Caco-2 (cell line): ENCODE measurements at regions of chr1 and their contacts with region 1.

Region 1: GRCh38 chr1:145740266-145740665 is 21.0 kb downstream of the CD160 start:
- DNase-seq: peak; percentile 52 to 56
- H3K4me3 ChIP-seq: no peak overlapping the region
- H3K4me3 Mint-ChIP-seq: no peak overlapping the region
- H3K27ac Mint-ChIP-seq: peak overlapping the region; percentile 17
- H3K4me1 ChIP-seq: peaks cover 20% of the 10 kb centered on the region
- H3K4me1 Mint-ChIP-seq: peaks cover 19% of the 10 kb centered on the region
- H3K27me3 ChIP-seq: no peaks in the 10 kb centered on the region
- H3K27me3 Mint-ChIP-seq: peaks cover 2% of the 10 kb centered on the region
- CTCF ChIP-seq: no peak

Region 2: GRCh38 chr1:145711213-145711651 is 29.0 kb before region 1 on chr1:
- CTCF ChIA-PET with region 1: no interaction called
- POLR2A ChIA-PET with region 1: no interaction called
- intact Hi-C with region 1: loop called (anchors 1 kb)
- DNase-seq: peak; percentile 89 to 93
- H3K4me3 ChIP-seq: no peak overlapping the region
- H3K4me3 Mint-ChIP-seq: peak overlapping the region; percentile 65
- H3K27ac Mint-ChIP-seq: peak overlapping the region; percentile 91
- H3K4me1 ChIP-seq: peaks cover 81% of the 10 kb centered on the region
- H3K4me1 Mint-ChIP-seq: peaks cover 50% of the 10 kb centered on the region
- H3K27me3 ChIP-seq: no peaks in the 10 kb centered on the region
- H3K27me3 Mint-ChIP-seq: no peaks in the 10 kb centered on the region
- CTCF ChIP-seq: no peak

Region 3: DNA sequence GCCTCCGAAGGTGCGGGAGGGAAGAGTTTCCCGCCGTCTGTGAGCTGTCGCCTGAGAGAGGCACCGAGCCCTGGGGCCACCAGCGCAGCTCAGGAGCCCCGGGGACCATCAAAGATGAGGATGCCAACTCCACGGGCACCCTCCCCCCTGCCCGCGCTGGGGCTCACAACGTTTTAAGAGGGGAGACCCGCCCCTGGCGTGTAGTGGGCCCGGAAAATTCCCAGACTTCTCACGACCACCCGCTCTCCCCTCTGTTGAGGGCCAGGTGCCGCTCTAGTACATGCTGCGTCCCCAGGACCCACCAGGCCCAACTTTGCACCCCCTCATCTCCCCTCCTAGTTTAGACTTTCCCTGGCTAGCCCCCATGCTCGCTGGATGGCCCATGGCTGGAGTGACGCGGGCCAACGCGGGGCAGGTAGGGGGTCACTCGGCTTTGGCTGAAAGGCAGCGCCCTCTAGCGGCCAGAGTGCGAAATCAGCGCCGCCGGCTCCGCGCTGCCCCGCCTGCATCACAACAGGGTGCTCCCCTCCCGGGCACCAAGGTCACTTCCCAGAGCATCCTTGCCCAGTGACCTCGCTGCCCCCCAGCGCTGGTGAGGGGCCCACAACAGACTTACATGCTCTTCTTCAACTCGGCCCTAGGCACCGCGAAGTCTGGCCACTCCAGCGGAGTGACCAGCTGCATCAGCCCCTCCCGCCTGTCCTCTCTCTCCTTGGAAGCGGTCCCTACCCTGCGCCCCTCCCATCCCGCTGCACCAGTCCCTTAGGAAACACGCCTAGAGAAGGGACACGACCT is 19.2 kb before region 1 on chr1:
- CTCF ChIA-PET with region 1: interaction called, 11 read pairs
- POLR2A ChIA-PET with region 1: no interaction called
- intact Hi-C with region 1: no loop called
- DNase-seq: peak; percentile 68 to 81
- H3K4me3 ChIP-seq: peak overlapping the region; percentile 23
- H3K4me3 Mint-ChIP-seq: peak overlapping the region; percentile 66
- H3K27ac Mint-ChIP-seq: peak overlapping the region; percentile 69
- H3K4me1 ChIP-seq: peaks cover 28% of the 10 kb centered on the region
- H3K4me1 Mint-ChIP-seq: peaks cover 38% of the 10 kb centered on the region
- H3K27me3 ChIP-seq: no peaks in the 10 kb centered on the region
- H3K27me3 Mint-ChIP-seq: no peaks in the 10 kb centered on the region
- CTCF ChIP-seq: peak; percentile 84 to 96

Region 4: GRCh38 chr1:145765574-145765973 is 25.3 kb after region 1 on chr1:
- CTCF ChIA-PET with region 1: no interaction called
- POLR2A ChIA-PET with region 1: no interaction called
- intact Hi-C with region 1: loop called (anchors 1 kb)
- DNase-seq: peak in 1 of 2 experiments; percentile 24
- H3K4me3 ChIP-seq: no peak overlapping the region
- H3K4me3 Mint-ChIP-seq: peak overlapping the region; percentile 16
- H3K27ac Mint-ChIP-seq: peak overlapping the region; percentile 86
- H3K4me1 ChIP-seq: peaks cover 42% of the 10 kb centered on the region
- H3K4me1 Mint-ChIP-seq: peaks cover 6% of the 10 kb centered on the region
- H3K27me3 ChIP-seq: no peaks in the 10 kb centered on the region
- H3K27me3 Mint-ChIP-seq: no peaks in the 10 kb centered on the region
- CTCF ChIP-seq: no peak

Region 5: DNA sequence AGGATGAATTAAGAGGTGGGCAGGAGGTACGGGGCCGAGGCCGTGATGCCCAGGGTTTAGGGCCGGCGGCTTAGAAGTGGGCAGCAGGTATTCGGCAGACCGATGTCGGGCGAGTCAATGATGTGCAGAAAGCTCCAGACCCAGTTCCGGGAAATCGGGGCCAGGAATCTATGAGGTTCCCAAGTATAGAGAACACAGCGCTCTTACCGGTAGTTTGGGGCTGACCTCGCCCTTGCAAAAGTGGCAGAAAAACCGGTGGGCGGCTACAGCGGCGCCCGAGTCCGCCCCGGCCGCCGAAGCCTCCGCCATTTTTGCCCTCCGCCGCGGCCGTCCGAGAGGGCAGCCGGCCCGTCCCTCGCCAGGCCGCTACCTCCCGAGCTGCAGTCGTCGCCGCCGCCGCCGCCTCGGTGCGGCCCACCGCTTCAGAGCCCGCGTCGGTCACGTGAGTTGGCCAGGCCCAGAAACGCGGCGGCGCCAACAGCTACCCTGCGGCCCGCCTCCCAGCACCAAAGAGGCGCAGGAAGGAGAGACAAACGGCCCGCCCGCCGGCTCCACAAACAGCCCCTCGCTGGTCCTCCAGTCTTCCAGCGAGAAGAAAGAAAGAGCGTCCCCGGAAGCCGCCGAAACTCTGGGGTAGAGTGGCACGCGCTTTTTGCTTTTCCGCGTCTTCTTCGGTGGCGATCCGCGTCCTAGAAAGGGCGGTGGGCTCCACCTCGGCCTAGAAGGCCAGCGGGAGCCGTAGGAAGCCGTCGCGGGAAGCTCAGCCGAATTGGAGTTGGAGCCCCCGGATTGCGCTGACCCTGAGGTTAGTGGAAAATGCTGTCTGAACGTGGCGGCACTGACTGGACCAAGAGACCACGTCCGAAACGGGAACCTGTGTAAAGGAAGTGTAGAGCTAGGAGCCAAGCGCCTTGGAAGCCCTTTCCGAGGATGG is 83.6 kb after region 1 on chr1 and contains the starts of genes POLR3C and RNF115:
- CTCF ChIA-PET with region 1: no interaction called
- POLR2A ChIA-PET with region 1: no interaction called
- intact Hi-C with region 1: loop called (anchors 1 kb)
- DNase-seq: peak; percentile 90 to 93
- H3K4me3 ChIP-seq: peak within 1 kb of the TSS; percentile 64
- H3K4me3 Mint-ChIP-seq: peak within 1 kb of the TSS; percentile 98
- H3K27ac Mint-ChIP-seq: peak within 1 kb of the TSS; percentile 97
- H3K4me1 ChIP-seq: no peaks in the 10 kb centered on the region
- H3K4me1 Mint-ChIP-seq: no peaks in the 10 kb centered on the region
- H3K27me3 ChIP-seq: no peaks in the 10 kb centered on the region
- H3K27me3 Mint-ChIP-seq: no peaks in the 10 kb centered on the region
- CTCF ChIP-seq: no peak
- total RNA-seq, gene POLR3C: 48.0 and 48.8 TPM in 2 replicates
- total RNA-seq, gene RNF115: 16.6 and 17.5 TPM in 2 replicates